ENCODE measurements at regions of chrX and their contacts with region 1.

Region 1: GRCh38 chrX:102950908-102951866 is 14.1 kb downstream of the RAB40AL start:
- DNase-seq: peak in 1 of 2 donors; percentile 15
- ATAC-seq: no peak
- H3K4me3 ChIP-seq: no peak overlapping the region
- H3K27ac ChIP-seq: no peak overlapping the region
- H3K4me1 ChIP-seq: no peaks in the 10 kb centered on the region
- H3K27me3 ChIP-seq: peaks cover 0 to 18% (median 0%) of the 10 kb centered on the region in 3 donors
- CTCF ChIP-seq: peak; percentile 47

Region 2: GRCh38 chrX:102892103-102892502 is 59.1 kb before region 1 on chrX:
- intact Hi-C with region 1: no loop called
- DNase-seq: no peak
- ATAC-seq: no peak
- H3K4me3 ChIP-seq: no peak overlapping the region
- H3K27ac ChIP-seq: no peak overlapping the region
- H3K4me1 ChIP-seq: no peaks in the 10 kb centered on the region
- H3K27me3 ChIP-seq: peaks cover 0 to 8% (median 0%) of the 10 kb centered on the region in 3 donors
- CTCF ChIP-seq: no peak

Region 3: DNA sequence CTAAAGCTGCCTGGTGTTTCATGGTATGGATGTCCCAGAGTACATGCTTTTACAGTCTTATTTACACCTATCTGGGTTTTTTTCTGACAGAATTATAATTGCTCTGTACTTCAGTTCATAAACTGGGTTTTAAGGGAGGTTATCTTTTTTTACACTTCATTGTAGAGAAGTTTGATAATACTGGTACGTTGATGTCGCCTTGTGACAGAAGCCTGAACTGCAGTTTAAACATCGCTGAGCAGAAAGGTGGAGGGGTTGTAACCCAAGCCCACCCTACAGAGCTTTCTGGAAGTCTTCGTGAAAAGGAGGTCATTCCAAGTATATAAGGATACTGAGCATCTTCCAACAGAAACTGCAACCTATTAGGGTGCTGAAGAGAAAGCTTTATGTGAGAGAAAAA is 66.4 kb after region 1 on chrX:
- intact Hi-C with region 1: loop called in 1 of 2 experiments (anchors 10 kb)
- DNase-seq: no peak
- ATAC-seq: no peak
- H3K4me3 ChIP-seq: no peak overlapping the region
- H3K27ac ChIP-seq: no peak overlapping the region
- H3K4me1 ChIP-seq: no peaks in the 10 kb centered on the region
- H3K27me3 ChIP-seq: peaks cover 0 to 7% (median 0%) of the 10 kb centered on the region in 3 donors
- CTCF ChIP-seq: no peak

Region 4: GRCh38 chrX:103175944-103176753 is 225.0 kb after region 1 on chrX:
- intact Hi-C with region 1: loop called in 1 of 2 experiments (anchors 10 kb)
- DNase-seq: peak; percentile 29 to 55
- ATAC-seq: no peak
- H3K4me3 ChIP-seq: no peak overlapping the region
- H3K27ac ChIP-seq: no peak overlapping the region
- H3K4me1 ChIP-seq: no peaks in the 10 kb centered on the region
- H3K27me3 ChIP-seq: peaks cover 0 to 30% (median 0%) of the 10 kb centered on the region in 3 donors
- CTCF ChIP-seq: peak; percentile 65